Activated naive CD4-positive, alpha-beta T cell treated with anti-CD3 and anti-CD28 coated beads, Interleukin-2, amount 10 ng/mL, durations not matched to agents 7 days and 5 days (primary cell): ENCODE measurements at regions of chr17 and their contacts with region 1.

Region 1: DNA sequence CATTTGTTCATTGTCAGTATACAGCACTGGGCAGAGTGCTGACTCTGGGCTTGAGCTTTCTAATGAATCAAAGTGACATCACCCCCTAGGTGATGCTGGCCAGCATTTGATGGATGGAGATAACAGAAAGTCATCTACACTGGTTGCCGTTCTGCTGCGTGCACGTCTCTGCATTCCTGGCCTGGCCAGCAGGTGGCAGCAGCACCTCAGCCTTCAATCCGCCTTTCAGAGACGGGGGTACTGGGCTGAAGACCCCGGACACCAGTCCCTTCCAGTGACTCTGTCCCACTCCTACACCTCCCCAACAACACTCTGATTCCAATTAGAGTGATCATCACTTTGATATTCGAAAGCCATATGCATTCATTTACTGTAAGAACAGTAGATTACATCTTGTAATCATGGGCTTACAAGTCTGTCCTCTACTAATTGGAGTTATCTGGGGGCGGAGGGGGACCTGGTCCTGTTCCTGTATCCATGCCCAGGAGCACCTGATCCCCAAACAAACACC is 6.0 kb downstream of the CPSF4L start:
- DNase-seq: peak; percentile 68
- H3K4me3 Mint-ChIP-seq: no peak overlapping the region
- H3K27ac Mint-ChIP-seq: no peak overlapping the region
- H3K4me1 Mint-ChIP-seq: no peaks in the 10 kb centered on the region
- H3K27me3 Mint-ChIP-seq: no peaks in the 10 kb centered on the region

Region 2: GRCh38 chr17:73231841-73232586 is 23.7 kb before region 1 on chr17:
- CTCF ChIA-PET with region 1: interaction called, 15 read pairs
- DNase-seq: peak; percentile 96
- H3K4me3 Mint-ChIP-seq: peak overlapping the region; percentile 83
- H3K27ac Mint-ChIP-seq: peak overlapping the region; percentile 95
- H3K4me1 Mint-ChIP-seq: peaks cover 63% of the 10 kb centered on the region
- H3K27me3 Mint-ChIP-seq: no peaks in the 10 kb centered on the region

Region 3: DNA sequence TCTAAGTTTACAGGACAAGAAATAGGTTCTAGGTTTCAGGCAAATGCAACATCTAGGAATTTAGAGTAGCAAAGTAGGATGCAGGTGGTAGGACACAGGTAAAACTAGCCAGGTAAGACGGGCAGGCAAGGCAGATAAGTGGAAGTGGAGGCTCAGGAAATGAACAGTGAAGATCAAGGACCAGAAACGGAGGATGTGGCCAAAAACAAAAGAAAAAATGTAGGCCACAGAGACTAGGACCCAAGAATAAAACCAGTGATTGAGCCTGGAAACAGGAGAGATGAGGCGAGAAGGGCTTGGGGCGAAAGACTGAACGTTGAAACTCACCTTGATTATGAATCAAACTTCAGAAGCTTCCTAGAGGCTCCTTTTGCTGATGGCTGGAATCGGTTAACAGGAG is 18.0 kb before region 1 on chr17:
- CTCF ChIA-PET with region 1: interaction called, 15 read pairs
- DNase-seq: no peak
- H3K4me3 Mint-ChIP-seq: no peak overlapping the region
- H3K27ac Mint-ChIP-seq: peak overlapping the region; percentile 49
- H3K4me1 Mint-ChIP-seq: peaks cover 45% of the 10 kb centered on the region
- H3K27me3 Mint-ChIP-seq: no peaks in the 10 kb centered on the region